ENCODE measurements at regions of chr17 and their contacts with region 1.

Region 1: GRCh38 chr17:72120642-72121163 is at the start of gene SOX9:
- DNase-seq: peak; percentile 95
- H3K4me3 Mint-ChIP-seq: peak within 1 kb of the TSS; percentile 97
- H3K27ac Mint-ChIP-seq: peak within 1 kb of the TSS; percentile 46
- H3K4me1 Mint-ChIP-seq: peaks cover 24% of the 10 kb centered on the region
- H3K27me3 Mint-ChIP-seq: no peaks in the 10 kb centered on the region
- CTCF ChIP-seq: no peak
- total RNA-seq, gene SOX9: 2.6 and 4.5 TPM in 2 replicates

Region 2: DNA sequence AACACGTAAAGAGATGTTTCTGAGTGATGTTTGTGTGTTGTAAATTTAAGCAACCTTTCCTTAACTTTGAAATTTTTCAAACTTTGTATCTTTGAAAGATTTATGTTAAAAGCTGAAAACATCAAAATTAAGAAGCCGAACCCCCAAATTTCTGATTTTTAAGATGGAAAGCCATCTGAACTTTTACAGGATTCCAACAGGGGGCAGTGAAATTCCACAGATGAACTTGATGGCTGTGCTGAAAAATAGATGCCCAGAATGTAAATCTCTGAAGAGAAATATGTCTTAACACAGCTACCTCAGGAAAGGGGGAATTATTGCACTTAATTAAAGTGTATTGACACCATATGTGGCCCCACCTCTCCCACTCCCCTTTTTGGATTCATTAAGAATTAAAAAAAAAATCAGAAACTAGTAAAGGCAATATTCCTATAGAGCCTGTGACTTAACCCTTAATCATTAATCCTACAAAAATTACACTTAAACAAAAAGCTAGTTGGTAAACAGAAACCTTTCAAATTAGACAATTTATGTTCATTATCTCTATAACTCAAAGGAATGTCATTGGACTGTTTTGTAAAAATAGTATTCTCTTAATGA is 1353.5 kb before region 1 on chr17:
- CTCF ChIA-PET with region 1: interaction called, 3 read pairs
- POLR2A ChIA-PET with region 1: interaction called, 7 read pairs
- intact Hi-C with region 1: loop called (anchors 1 kb)
- DNase-seq: peak; percentile 48
- H3K4me3 Mint-ChIP-seq: no peak overlapping the region
- H3K27ac Mint-ChIP-seq: no peak overlapping the region
- H3K4me1 Mint-ChIP-seq: no peaks in the 10 kb centered on the region
- H3K27me3 Mint-ChIP-seq: peaks cover 9% of the 10 kb centered on the region
- CTCF ChIP-seq: peak; percentile 83

Region 3: GRCh38 chr17:71237903-71238538 is 882.7 kb before region 1 on chr17:
- CTCF ChIA-PET with region 1: interaction called, 4 read pairs
- POLR2A ChIA-PET with region 1: no interaction called
- intact Hi-C with region 1: loop called (anchors 1 kb)
- DNase-seq: peak; percentile 63
- H3K4me3 Mint-ChIP-seq: no peak overlapping the region
- H3K27ac Mint-ChIP-seq: no peak overlapping the region
- H3K4me1 Mint-ChIP-seq: no peaks in the 10 kb centered on the region
- H3K27me3 Mint-ChIP-seq: no peaks in the 10 kb centered on the region
- CTCF ChIP-seq: peak; percentile 56

Region 4: GRCh38 chr17:71959154-71959553 is 161.5 kb before region 1 on chr17:
- CTCF ChIA-PET with region 1: no interaction called
- POLR2A ChIA-PET with region 1: no interaction called
- intact Hi-C with region 1: loop called (anchors 1 kb)
- DNase-seq: peak; percentile 53
- H3K4me3 Mint-ChIP-seq: no peak overlapping the region
- H3K27ac Mint-ChIP-seq: no peak overlapping the region
- H3K4me1 Mint-ChIP-seq: no peaks in the 10 kb centered on the region
- H3K27me3 Mint-ChIP-seq: no peaks in the 10 kb centered on the region
- CTCF ChIP-seq: peak; percentile 50

Region 5: GRCh38 chr17:72090108-72090507 is 30.6 kb before region 1 on chr17:
- CTCF ChIA-PET with region 1: no interaction called
- POLR2A ChIA-PET with region 1: no interaction called
- intact Hi-C with region 1: no loop called
- DNase-seq: no peak
- H3K4me3 Mint-ChIP-seq: no peak overlapping the region
- H3K27ac Mint-ChIP-seq: no peak overlapping the region
- H3K4me1 Mint-ChIP-seq: no peaks in the 10 kb centered on the region
- H3K27me3 Mint-ChIP-seq: no peaks in the 10 kb centered on the region
- CTCF ChIP-seq: no peak

Region 6: DNA sequence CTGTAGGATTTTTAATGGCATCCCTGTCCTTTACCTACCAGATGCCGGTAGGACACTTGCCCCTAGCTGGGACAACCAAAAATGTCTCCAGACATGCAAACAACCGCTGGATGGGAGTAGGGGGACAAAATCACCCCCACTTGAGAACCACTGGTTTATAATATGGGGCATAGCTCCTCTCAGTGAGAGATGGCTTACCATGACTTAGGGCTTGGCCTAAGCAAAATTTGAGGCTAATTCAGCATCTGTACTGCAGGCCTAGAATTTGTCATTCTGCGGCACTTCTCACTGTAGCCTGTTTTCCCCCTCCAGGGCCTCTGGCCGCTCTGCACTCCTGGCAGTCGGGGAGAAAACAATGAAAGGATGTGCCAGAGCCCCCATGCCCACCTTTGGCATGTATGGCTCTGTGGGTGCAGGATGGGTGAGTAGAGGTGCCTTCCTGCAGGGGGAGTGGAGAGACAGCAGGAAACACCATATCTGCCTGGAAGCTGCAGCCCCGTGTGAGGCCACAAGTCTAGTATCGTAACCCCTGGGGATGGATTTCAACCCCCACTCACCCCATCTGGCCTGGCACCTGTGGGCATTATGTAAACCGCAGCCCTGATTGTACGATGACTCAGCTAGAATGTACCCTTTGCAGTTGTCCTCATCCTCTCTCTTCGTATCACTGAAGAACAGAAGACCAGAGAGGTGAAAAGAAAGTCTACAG is 268.2 kb after region 1 on chr17:
- CTCF ChIA-PET with region 1: no interaction called
- POLR2A ChIA-PET with region 1: no interaction called
- intact Hi-C with region 1: loop called (anchors 2 kb)
- DNase-seq: peak; percentile 95
- H3K4me3 Mint-ChIP-seq: peak overlapping the region; percentile 19
- H3K27ac Mint-ChIP-seq: peak overlapping the region; percentile 51
- H3K4me1 Mint-ChIP-seq: peaks cover 67% of the 10 kb centered on the region
- H3K27me3 Mint-ChIP-seq: no peaks in the 10 kb centered on the region
- CTCF ChIP-seq: peak; percentile 23

Region 7: GRCh38 chr17:72539981-72540897 is 419.5 kb after region 1 on chr17:
- CTCF ChIA-PET with region 1: interaction called, 3 read pairs
- POLR2A ChIA-PET with region 1: interaction called, 5 read pairs
- intact Hi-C with region 1: loop called (anchors 1 kb)
- DNase-seq: peak; percentile 59
- H3K4me3 Mint-ChIP-seq: peak overlapping the region; percentile 66
- H3K27ac Mint-ChIP-seq: no peak overlapping the region
- H3K4me1 Mint-ChIP-seq: peaks cover 25% of the 10 kb centered on the region
- H3K27me3 Mint-ChIP-seq: no peaks in the 10 kb centered on the region
- CTCF ChIP-seq: peak; percentile 96

Measured in MCF 10A (cell line).